Right ventricle myocardium superior (tissue), 1 donor: ENCODE measurements at regions of chrX and their contacts with region 1.

Region 1: GRCh38 chrX:51336584-51336983 is 4.0 kb downstream of the NUDT10 start:
- DNase-seq: no peak
- ATAC-seq: no peak

Region 2: DNA sequence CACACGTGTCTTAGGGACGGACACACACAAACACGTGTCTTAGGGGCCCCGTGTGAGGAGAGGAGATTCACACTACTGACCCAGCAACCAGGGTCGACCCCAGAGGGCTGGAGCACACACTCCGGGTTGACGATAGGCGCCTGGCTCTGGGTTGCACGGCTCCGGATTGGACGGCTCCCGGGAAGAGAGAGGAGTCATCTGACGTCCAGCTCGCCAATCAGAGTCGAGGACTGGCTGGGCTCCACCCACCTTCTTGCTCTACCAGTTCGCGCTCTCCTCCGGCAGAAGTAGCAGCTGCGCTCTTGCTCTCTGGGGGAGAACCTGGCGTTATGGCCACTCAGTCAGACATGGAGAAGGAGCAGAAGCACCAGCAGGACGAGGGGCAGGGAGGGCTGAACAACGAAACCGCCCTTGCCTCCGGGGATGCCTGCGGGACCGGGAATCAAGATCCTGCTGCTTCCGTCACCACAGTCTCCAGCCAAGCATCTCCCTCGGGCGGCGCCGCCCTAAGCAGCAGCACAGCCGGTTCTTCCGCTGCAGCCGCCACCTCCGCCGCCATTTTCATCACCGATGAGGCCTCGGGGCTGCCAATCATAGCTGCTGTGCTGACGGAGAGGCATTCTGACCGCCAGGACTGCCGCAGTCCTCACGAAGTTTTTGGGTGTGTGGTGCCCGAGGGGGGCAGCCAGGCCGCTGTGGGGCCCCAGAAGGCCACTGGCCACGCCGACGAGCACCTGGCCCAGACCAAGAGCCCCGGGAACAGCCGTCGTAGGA is 70.3 kb after region 1 on chrX:
- intact Hi-C with region 1: loop called (anchors 10 kb)
- DNase-seq: no peak
- ATAC-seq: no peak